ENCODE measurements at regions of chr10 and their contacts with region 1.

Region 1: GRCh38 chr10:3484306-3485056 is 300.5 kb downstream of the KLF6 start:
- DNase-seq: no peak
- H3K4me3 ChIP-seq: no peak overlapping the region
- CTCF ChIP-seq: no peak
- POLR2A ChIP-seq: no peak

Region 2: DNA sequence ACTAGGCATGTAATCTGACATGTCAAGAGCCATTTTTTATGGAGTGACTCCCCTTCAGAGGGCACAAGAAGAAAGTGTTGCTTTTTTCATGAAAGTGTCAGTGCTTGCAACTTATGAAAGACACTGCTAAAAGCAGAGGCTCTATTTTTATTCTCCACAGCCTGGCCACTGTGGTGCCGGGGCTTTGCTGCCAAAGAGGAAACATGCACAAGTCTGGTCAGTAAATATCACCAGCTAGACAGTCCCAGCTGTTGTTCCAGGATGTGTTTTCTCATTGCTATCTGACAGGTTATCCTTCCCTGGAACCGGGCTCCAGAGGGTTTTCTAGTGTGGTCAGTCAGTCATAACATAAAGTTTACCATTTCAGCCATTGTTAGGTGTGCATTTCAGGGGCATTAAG is 131.2 kb before region 1 on chr10:
- intact Hi-C with region 1: no loop called
- DNase-seq: no peak
- H3K4me3 ChIP-seq: no peak overlapping the region
- CTCF ChIP-seq: no peak
- POLR2A ChIP-seq: no peak

Region 3: GRCh38 chr10:3776796-3777571 is 292.5 kb after region 1 on chr10:
- intact Hi-C with region 1: loop called (anchors 5 kb)
- DNase-seq: peak in 1 of 2 donors; percentile 78
- H3K4me3 ChIP-seq: no peak overlapping the region
- CTCF ChIP-seq: no peak
- POLR2A ChIP-seq: no peak

Region 4: DNA sequence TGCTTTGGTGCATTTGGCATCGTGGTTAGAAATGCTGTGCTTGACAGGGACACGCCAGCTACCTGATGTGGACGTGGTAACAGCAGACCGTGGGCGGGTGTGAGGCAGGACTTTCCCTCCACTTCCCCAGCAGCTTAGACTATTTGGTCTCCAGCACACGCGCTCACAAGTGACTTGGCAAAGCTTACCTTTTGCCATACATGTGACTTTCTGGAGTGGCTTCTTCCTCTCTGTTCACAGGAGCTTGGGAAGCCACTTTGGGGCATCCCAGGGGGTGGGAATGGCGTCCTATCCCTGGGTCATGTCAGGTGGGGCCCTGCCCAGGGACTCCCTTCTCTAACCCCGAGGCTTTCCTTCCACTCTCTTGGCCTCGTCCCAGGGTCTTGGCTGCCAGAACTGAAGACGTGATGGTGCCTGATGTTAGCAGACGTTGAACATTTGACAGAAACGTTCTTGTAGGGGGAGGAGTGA is 529.2 kb after region 1 on chr10:
- intact Hi-C with region 1: no loop called
- DNase-seq: peak in 1 of 2 donors; percentile 35
- H3K4me3 ChIP-seq: no peak overlapping the region
- CTCF ChIP-seq: no peak
- POLR2A ChIP-seq: no peak